ENCODE measurements at regions of chr2 and their contacts with region 1.

Region 1: DNA sequence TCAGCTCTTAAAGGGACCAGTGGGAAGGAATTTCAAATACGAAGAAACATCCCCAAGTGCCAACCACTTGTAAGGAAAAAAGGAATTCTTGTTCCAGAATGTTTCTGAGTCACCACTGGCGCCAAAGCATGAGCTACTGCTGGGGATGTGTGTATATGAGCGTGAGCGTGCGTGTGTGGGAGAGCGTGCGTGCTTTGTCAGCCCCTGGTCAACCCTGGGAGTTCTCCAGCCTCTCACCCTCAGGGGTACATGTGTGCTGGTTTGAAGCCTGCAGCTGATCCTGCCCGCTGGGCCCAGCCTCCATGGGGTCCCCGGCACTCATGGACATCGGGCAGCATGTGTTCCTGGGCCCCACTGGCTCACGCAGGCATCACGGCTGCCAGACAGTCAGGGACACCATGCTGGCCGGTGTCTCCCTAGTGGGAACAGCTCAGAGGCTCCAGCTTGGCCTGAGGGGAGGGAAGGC is 17.1 kb downstream of the HS6ST1 start:
- DNase-seq: peak in 6 of 7 donors; percentile 59 to 76 (median 70)
- H3K4me3 ChIP-seq: no peak overlapping the region
- H3K27ac ChIP-seq: peak overlapping the region; percentile 16 to 94 (median 79)
- H3K4me1 ChIP-seq: peaks cover 67 to 69% of the 10 kb centered on the region in 2 donors
- H3K27me3 ChIP-seq: no peaks in the 10 kb centered on the region
- CTCF ChIP-seq: no peak
- POLR2A ChIP-seq: no peak

Region 2: DNA sequence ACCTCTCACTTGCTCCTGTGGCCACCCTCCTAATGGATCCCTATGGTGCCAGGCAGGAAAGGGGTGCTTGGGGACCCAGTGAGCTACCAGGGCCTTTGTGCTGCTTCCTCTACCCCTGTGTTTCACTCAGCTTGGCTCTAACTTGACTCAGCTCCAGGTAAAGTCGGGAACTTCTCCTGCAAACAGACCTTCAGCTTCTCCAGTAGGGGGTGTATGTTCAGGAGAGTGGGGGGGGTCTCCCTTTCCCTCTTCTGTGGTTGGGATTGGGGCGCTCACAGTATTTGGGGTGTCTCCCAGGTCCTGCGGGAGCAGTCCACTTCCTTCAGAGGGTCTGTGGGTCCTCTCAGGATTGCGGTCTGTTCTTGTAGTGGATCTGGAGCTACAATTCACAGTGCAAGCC is 247.4 kb before region 1 on chr2:
- intact Hi-C with region 1: no loop called
- DNase-seq: no peak
- H3K4me3 ChIP-seq: no peak overlapping the region
- H3K27ac ChIP-seq: no peak overlapping the region
- H3K4me1 ChIP-seq: peaks cover 0 to 7% of the 10 kb centered on the region in 2 donors
- H3K27me3 ChIP-seq: no peaks in the 10 kb centered on the region
- CTCF ChIP-seq: no peak
- POLR2A ChIP-seq: no peak

Region 3: GRCh38 chr2:128069769-128070168 is 231.8 kb before region 1 on chr2:
- intact Hi-C with region 1: no loop called
- DNase-seq: peak; percentile 26 to 64 (median 56)
- H3K4me3 ChIP-seq: no peak overlapping the region
- H3K27ac ChIP-seq: no peak overlapping the region
- H3K4me1 ChIP-seq: no peaks in the 10 kb centered on the region
- H3K27me3 ChIP-seq: no peaks in the 10 kb centered on the region
- CTCF ChIP-seq: no peak
- POLR2A ChIP-seq: no peak

Region 4: DNA sequence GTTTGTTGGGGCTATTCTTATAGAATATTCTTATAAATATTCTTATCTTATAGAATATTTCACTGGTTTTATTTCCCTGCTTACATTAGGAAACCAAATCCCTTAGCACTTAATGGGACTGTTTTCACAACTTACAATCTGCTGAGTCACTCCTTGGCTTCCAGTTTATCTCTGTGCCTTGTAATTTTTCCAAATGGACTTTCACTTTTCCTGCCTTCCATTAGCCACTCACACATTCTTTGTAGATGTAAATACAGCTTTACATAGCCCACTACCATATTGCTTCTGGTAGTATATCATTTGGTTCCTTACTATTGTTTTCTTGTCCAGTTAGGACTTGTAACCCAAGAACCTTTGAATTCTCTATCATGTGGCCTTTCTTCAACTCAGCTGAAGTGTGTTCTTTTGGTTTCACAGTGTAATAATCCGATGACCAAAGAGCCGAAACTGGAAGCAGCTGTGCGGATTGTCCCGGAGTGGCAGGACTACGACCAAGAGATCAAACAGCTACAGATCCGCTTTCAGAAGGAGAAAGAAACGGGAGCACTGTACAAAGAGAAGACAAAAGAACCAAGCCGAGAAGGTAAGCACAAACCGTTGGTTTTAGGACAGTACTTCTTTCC is 114.4 kb before region 1 on chr2:
- intact Hi-C with region 1: loop called in 1 of 2 experiments (anchors 5 kb)
- DNase-seq: no peak
- H3K4me3 ChIP-seq: no peak overlapping the region
- H3K27ac ChIP-seq: peak overlapping the region in 2 of 5 donors; percentile 18 to 20
- H3K4me1 ChIP-seq: peaks cover 0 to 9% of the 10 kb centered on the region in 2 donors
- H3K27me3 ChIP-seq: no peaks in the 10 kb centered on the region
- CTCF ChIP-seq: no peak
- POLR2A ChIP-seq: no peak

Measured in adrenal gland (tissue), 19 donors.